Calu3 (cell line): ENCODE measurements at regions of chr7 and their contacts with region 1.

Region 1: GRCh38 chr7:46654546-46655443 is 733.7 kb upstream of the IGFBP3 start:
- DNase-seq: no peak
- H3K4me3 Mint-ChIP-seq: no peak overlapping the region
- H3K27ac Mint-ChIP-seq: peak overlapping the region; percentile 69
- H3K4me1 Mint-ChIP-seq: peaks cover 31% of the 10 kb centered on the region
- H3K27me3 Mint-ChIP-seq: no peaks in the 10 kb centered on the region
- CTCF ChIP-seq: peak; percentile 48

Region 2: DNA sequence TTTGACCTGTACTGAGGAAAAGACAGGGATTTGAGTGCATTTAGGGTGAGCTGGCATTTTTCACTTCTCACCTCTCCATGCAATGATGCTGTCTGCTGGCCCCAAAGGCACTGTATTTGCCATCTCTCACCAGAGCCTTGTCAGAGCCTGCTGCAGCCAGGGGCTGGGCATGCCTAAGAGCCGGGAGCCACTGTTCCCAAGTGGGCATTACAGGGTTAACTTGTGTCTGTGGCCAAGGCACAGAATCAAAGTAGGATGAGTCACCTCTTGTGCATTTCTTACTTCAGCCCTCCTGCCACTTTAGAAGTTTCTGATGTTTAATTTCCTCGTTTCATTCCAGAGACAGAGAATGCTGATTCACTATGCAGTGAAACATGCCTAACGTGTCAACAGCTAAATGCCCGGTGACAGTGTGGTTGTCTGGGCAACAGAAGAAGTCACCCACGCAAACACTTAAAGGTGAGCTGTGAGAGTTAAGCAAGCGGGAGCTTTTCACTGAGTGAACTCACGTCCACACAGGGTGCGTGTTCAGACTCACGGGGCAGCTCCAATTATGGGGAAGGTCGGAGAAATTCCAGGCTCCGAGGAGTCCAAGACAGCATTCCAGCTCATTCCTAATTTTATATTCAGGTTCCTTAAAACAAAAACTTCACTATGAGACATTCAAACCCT is 676.6 kb before region 1 on chr7:
- CTCF ChIA-PET with region 1: interaction called, 3 read pairs
- intact Hi-C with region 1: loop called (anchors 5 kb)
- DNase-seq: peak; percentile 89
- H3K4me3 Mint-ChIP-seq: peak overlapping the region; percentile 37
- H3K27ac Mint-ChIP-seq: peak overlapping the region; percentile 99
- H3K4me1 Mint-ChIP-seq: peaks cover 73% of the 10 kb centered on the region
- H3K27me3 Mint-ChIP-seq: no peaks in the 10 kb centered on the region
- CTCF ChIP-seq: no peak

Region 3: GRCh38 chr7:46385662-46386309 is 269.0 kb before region 1 on chr7:
- CTCF ChIA-PET with region 1: no interaction called
- intact Hi-C with region 1: loop called (anchors 5 kb)
- DNase-seq: no peak
- H3K4me3 Mint-ChIP-seq: no peak overlapping the region
- H3K27ac Mint-ChIP-seq: peak overlapping the region; percentile 65
- H3K4me1 Mint-ChIP-seq: peaks cover 28% of the 10 kb centered on the region
- H3K27me3 Mint-ChIP-seq: no peaks in the 10 kb centered on the region
- CTCF ChIP-seq: no peak

Region 4: DNA sequence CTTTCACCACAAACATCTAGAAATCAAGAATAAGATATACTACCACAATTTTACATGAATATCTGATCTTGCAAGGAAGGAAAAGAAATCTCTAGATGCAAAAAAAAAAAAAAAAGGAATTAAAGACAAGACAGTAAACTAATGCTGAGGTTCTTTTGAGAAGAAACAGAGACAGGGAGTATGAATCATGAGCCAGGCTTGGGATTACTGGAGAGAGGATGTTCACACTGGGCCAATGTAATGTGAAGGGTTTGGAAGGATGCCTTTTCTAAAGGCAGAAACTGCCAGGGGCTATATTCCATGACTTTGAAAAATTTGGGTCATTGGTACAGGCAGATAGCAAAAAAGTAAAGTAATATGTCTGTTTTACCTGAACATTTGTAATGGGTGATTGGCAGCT is 160.8 kb before region 1 on chr7:
- CTCF ChIA-PET with region 1: interaction called, 7 read pairs
- intact Hi-C with region 1: loop called (anchors 1 kb)
- DNase-seq: no peak
- H3K4me3 Mint-ChIP-seq: no peak overlapping the region
- H3K27ac Mint-ChIP-seq: peak overlapping the region; percentile 82
- H3K4me1 Mint-ChIP-seq: peaks cover 35% of the 10 kb centered on the region
- H3K27me3 Mint-ChIP-seq: no peaks in the 10 kb centered on the region
- CTCF ChIP-seq: no peak

Region 5: GRCh38 chr7:46586406-46586805 is 68.4 kb before region 1 on chr7:
- CTCF ChIA-PET with region 1: interaction called, 5 read pairs
- intact Hi-C with region 1: loop called (anchors 5 kb)
- DNase-seq: no peak
- H3K4me3 Mint-ChIP-seq: no peak overlapping the region
- H3K27ac Mint-ChIP-seq: no peak overlapping the region
- H3K4me1 Mint-ChIP-seq: peaks cover 16% of the 10 kb centered on the region
- H3K27me3 Mint-ChIP-seq: no peaks in the 10 kb centered on the region
- CTCF ChIP-seq: no peak

Region 6: DNA sequence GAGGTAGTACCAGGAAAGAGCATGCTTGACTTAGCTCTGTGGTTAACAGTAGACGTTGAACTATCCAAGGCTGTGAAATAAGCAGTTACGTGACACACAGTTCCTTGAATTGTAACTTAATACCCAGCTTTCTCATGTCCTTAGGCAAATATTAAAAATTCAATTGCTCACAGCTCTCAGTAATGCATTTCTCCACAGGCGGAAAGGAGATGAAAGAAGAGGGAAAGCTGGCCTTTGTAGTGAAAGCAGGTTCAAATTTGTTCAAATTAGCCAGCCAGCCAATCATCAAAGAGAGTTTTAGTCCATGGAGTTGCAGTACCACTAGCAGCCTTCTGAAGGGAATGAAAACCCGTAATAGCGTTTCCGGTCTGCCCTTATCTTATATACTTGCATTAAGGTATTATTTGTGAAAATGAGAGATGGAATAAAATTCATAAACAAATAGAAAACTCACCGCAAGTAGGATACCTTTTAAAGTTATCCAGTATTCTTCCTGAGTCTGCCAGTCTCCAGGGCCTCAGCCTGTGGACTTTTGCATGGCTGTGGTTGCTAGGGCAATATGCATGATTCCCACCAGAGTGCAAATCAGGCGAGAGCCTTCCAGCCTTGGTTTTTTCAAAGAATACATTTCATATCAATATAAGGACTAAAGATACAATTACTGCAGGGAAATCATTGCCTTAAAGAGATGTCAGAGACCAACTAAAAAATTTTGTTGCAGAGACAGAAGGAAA is 131.6 kb after region 1 on chr7:
- CTCF ChIA-PET with region 1: interaction called, 6 read pairs
- intact Hi-C with region 1: loop called (anchors 2 kb)
- DNase-seq: peak; percentile 69
- H3K4me3 Mint-ChIP-seq: peak overlapping the region; percentile 45
- H3K27ac Mint-ChIP-seq: peak overlapping the region; percentile 95
- H3K4me1 Mint-ChIP-seq: peaks cover 29% of the 10 kb centered on the region
- H3K27me3 Mint-ChIP-seq: no peaks in the 10 kb centered on the region
- CTCF ChIP-seq: no peak

Region 7: DNA sequence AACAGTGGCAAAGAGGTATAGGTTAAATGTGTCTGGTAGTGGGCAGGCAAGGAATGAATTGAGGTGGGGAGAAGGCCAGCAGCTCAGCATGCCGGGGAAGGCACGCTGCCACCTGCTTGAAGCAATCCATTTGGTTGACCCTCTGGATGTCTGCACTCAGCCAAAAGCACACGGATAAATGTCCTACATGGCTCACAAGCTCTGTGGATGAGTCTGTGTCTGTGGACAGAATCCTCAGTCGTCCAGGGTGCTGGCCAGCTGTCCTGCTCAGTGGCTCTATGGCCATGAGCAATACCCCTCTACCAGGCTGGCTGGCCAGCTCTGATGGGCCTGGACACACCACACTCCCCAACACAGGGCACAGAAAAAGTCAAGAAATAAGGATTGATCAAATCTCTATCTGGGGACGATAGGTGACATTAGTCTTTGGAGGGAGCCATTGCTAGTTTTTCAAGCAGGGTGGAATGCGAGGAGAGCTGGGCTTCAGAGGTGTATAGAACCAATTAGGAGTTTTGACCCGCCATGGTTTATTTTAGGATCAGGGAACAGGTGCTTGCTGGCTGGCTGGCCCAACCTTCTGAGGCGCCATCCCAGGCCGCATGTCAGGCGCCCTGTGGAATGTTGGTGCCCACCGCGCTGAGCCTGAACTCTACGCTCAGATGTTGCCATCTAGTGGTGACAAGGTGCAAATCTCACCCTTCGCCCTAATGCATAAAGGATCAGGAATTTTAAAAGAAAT is 433.7 kb after region 1 on chr7:
- CTCF ChIA-PET with region 1: no interaction called
- intact Hi-C with region 1: loop called (anchors 5 kb)
- DNase-seq: peak; percentile 77
- H3K4me3 Mint-ChIP-seq: no peak overlapping the region
- H3K27ac Mint-ChIP-seq: no peak overlapping the region
- H3K4me1 Mint-ChIP-seq: no peaks in the 10 kb centered on the region
- H3K27me3 Mint-ChIP-seq: no peaks in the 10 kb centered on the region
- CTCF ChIP-seq: peak; percentile 98

Region 8: GRCh38 chr7:47100148-47100816 is 445.5 kb after region 1 on chr7:
- CTCF ChIA-PET with region 1: no interaction called
- intact Hi-C with region 1: no loop called
- DNase-seq: no peak
- H3K4me3 Mint-ChIP-seq: no peak overlapping the region
- H3K27ac Mint-ChIP-seq: no peak overlapping the region
- H3K4me1 Mint-ChIP-seq: peaks cover 8% of the 10 kb centered on the region
- H3K27me3 Mint-ChIP-seq: no peaks in the 10 kb centered on the region
- CTCF ChIP-seq: no peak

Region 9: DNA sequence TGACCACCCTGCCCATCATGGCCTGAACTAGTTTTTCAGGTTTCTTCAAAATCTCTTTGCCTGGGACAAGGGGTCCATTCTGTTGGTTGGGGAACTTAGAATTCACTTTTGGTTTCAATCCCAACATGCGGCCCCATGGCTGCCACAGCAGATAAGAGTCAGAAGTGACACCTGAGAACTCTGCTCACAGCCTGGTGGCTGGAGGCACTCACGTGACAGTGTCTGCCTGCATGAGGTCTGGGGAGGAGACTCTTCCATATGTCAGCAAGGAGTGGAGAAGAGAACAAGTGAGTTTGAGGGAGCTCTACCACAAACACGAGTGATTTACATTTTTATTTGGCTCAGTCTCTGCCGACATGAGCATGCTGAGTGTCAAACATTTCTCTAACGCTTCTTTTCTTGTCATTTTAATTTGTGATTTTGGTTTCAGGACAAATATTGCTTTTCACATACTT is 556.8 kb after region 1 on chr7:
- CTCF ChIA-PET with region 1: no interaction called
- intact Hi-C with region 1: no loop called
- DNase-seq: peak; percentile 59
- H3K4me3 Mint-ChIP-seq: no peak overlapping the region
- H3K27ac Mint-ChIP-seq: no peak overlapping the region
- H3K4me1 Mint-ChIP-seq: peaks cover 14% of the 10 kb centered on the region
- H3K27me3 Mint-ChIP-seq: peaks cover 51% of the 10 kb centered on the region
- CTCF ChIP-seq: no peak